ENCODE measurements at regions of chr11 and their contacts with region 1.

Region 1: GRCh38 chr11:7548659-7549274 is 35.0 kb downstream of the PPFIBP2 start:
- DNase-seq: peak in 4 of 5 donors; percentile 10 to 30 (median 22)
- H3K4me3 ChIP-seq: no peak overlapping the region
- H3K4me3 Mint-ChIP-seq: no peak overlapping the region
- H3K27ac ChIP-seq: no peak overlapping the region
- H3K27ac Mint-ChIP-seq: peak overlapping the region in 1 of 7 donors; percentile 2
- H3K4me1 ChIP-seq: no peaks in the 10 kb centered on the region
- H3K4me1 Mint-ChIP-seq: peaks cover 0 to 23% (median 6%) of the 10 kb centered on the region in 4 donors
- H3K27me3 ChIP-seq: no peaks in the 10 kb centered on the region
- H3K27me3 Mint-ChIP-seq: no peaks in the 10 kb centered on the region

Region 2: GRCh38 chr11:7527029-7527428 is 21.7 kb before region 1 on chr11:
- CTCF ChIA-PET with region 1: interaction called, 5 read pairs
- POLR2A ChIA-PET with region 1: no interaction called
- intact Hi-C with region 1: loop called (anchors 2 kb)
- DNase-seq: peak; percentile 63 to 76 (median 71)
- H3K4me3 ChIP-seq: no peak overlapping the region
- H3K4me3 Mint-ChIP-seq: peak overlapping the region; percentile 2 to 86 (median 75)
- H3K27ac ChIP-seq: peak overlapping the region; percentile 13
- H3K27ac Mint-ChIP-seq: peak overlapping the region; percentile 70 to 93 (median 86)
- H3K4me1 ChIP-seq: peaks cover 83% of the 10 kb centered on the region
- H3K4me1 Mint-ChIP-seq: peaks cover 24 to 94% (median 41%) of the 10 kb centered on the region in 4 donors
- H3K27me3 ChIP-seq: no peaks in the 10 kb centered on the region
- H3K27me3 Mint-ChIP-seq: no peaks in the 10 kb centered on the region